MCF 10A (cell line): ENCODE measurements at regions of chr19 and their contacts with region 1.

Region 1: DNA sequence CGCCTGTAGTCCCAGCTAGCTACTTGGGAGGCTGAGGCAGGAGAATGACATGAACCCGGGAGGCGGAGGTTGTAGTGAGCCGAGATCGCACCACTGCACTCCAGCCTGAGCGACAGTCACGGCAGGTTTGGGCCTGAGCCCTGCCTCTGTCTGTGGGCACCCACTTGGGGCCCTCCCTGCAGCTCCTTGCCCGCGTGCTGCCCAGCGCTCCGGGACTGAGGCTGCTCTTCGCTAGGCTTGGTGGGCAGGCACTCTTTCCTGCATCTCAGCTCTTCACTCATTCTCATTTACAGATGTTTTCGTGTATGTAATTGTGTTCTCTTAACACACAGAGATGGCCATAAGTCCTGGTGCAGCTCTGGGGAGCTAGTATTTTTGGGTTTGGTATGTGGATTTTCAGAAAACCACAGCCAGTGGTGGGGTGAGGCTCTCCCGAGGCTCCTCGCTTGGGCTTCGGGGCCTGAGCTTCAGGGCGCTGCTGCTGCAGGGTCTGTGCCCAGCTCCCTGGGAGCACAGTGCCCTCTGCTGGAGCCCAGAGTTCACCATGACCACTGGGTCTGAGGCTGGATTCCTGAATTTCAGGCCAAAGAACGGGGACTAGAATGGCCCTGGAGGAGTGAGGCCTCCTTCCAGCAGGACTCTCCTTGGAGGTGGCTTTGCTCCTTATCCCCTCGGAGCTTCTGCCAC is 15.2 kb downstream of the UPF1 start:
- DNase-seq: peak; percentile 72
- H3K4me3 Mint-ChIP-seq: no peak overlapping the region
- H3K27ac Mint-ChIP-seq: peak overlapping the region; percentile 46
- H3K4me1 Mint-ChIP-seq: peaks cover 24% of the 10 kb centered on the region
- H3K27me3 Mint-ChIP-seq: no peaks in the 10 kb centered on the region
- CTCF ChIP-seq: peak; percentile 87

Region 2: GRCh38 chr19:18594096-18594823 is 252.7 kb before region 1 on chr19:
- CTCF ChIA-PET with region 1: interaction called, 25 read pairs
- POLR2A ChIA-PET with region 1: interaction called, 5 read pairs
- intact Hi-C with region 1: loop called (anchors 1 kb)
- DNase-seq: peak; percentile 73
- H3K4me3 Mint-ChIP-seq: no peak overlapping the region
- H3K27ac Mint-ChIP-seq: no peak overlapping the region
- H3K4me1 Mint-ChIP-seq: peaks cover 17% of the 10 kb centered on the region
- H3K27me3 Mint-ChIP-seq: no peaks in the 10 kb centered on the region
- CTCF ChIP-seq: peak; percentile 93

Region 3: GRCh38 chr19:18771328-18772242 is 75.4 kb before region 1 on chr19:
- CTCF ChIA-PET with region 1: interaction called, 69 read pairs
- POLR2A ChIA-PET with region 1: interaction called, 3 read pairs
- intact Hi-C with region 1: loop called (anchors 1 kb)
- DNase-seq: no peak
- H3K4me3 Mint-ChIP-seq: no peak overlapping the region
- H3K27ac Mint-ChIP-seq: no peak overlapping the region
- H3K4me1 Mint-ChIP-seq: peaks cover 38% of the 10 kb centered on the region
- H3K27me3 Mint-ChIP-seq: no peaks in the 10 kb centered on the region
- CTCF ChIP-seq: no peak

Region 4: DNA sequence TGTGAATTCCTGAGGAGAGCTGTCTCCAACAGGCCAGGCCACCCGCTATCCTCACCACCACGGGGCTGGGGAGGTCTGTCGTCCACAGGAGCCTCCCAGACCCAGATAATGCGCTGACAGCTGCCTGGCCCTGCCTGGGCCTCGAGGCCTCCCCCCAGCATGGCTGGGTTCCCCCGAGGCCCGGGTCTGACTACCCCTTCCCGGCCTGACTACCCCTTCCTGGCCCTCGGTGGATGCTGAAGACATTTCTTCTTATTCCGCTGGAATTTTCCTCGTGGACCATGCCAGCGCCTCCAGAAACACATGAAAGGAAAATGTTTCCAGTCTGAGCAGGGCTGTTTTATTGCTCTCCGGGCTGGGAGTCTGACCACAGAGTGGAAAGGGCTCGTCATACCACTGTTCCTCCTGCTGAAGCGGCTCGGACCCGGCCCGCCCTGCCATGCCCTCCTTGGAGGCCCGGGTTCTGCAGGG is 39.1 kb before region 1 on chr19:
- CTCF ChIA-PET with region 1: interaction called, 14 read pairs
- POLR2A ChIA-PET with region 1: no interaction called
- intact Hi-C with region 1: no loop called
- DNase-seq: no peak
- H3K4me3 Mint-ChIP-seq: no peak overlapping the region
- H3K27ac Mint-ChIP-seq: no peak overlapping the region
- H3K4me1 Mint-ChIP-seq: no peaks in the 10 kb centered on the region
- H3K27me3 Mint-ChIP-seq: no peaks in the 10 kb centered on the region
- CTCF ChIP-seq: no peak

Region 5: DNA sequence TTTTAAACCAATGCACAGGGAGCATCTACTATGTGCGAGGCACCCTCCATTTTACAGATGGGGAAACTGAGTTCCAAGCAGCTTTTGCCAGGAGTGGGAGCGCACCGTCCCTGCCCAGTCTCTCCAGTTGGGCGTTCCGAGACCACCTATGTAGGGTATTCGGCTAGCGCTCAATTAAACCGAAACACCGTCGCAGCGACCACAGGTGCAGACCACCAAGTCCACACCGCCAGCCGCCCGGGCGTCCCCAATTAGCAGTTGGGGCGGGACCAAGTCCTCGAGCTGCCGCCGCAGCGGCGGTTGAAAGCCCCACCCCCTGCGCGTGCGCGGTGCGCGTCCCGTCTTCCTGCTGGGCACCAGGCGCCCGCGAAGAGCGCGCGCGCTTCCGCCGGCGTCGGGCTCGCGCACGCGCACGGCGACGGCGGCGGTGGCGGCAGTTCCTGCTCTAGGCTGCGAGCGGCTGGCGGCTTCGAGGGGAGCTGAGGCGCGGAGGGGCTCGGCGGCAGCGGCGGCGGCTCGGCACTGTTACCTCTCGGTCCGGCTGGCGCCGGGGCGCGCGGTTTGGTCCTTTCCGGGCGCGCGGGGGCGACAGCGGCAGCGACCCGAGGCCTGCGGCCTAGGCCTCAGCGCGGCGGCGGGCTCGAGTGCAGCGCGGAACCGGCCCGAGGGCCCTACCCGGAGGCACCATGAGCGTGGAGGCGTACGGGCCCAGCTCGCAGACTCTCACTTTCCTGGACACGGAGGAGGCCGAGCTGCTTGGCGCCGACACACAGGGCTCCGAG is 15.3 kb before region 1 on chr19 and contains the start of gene UPF1:
- CTCF ChIA-PET with region 1: interaction called, 46 read pairs
- POLR2A ChIA-PET with region 1: interaction called, 29 read pairs
- intact Hi-C with region 1: no loop called
- DNase-seq: peak; percentile 90
- H3K4me3 Mint-ChIP-seq: peak within 1 kb of the TSS; percentile 94
- H3K27ac Mint-ChIP-seq: peak within 1 kb of the TSS; percentile 98
- H3K4me1 Mint-ChIP-seq: peaks cover 25% of the 10 kb centered on the region
- H3K27me3 Mint-ChIP-seq: no peaks in the 10 kb centered on the region
- CTCF ChIP-seq: no peak
- total RNA-seq, gene UPF1: 79.8 and 85.0 TPM in 2 replicates

Region 6: DNA sequence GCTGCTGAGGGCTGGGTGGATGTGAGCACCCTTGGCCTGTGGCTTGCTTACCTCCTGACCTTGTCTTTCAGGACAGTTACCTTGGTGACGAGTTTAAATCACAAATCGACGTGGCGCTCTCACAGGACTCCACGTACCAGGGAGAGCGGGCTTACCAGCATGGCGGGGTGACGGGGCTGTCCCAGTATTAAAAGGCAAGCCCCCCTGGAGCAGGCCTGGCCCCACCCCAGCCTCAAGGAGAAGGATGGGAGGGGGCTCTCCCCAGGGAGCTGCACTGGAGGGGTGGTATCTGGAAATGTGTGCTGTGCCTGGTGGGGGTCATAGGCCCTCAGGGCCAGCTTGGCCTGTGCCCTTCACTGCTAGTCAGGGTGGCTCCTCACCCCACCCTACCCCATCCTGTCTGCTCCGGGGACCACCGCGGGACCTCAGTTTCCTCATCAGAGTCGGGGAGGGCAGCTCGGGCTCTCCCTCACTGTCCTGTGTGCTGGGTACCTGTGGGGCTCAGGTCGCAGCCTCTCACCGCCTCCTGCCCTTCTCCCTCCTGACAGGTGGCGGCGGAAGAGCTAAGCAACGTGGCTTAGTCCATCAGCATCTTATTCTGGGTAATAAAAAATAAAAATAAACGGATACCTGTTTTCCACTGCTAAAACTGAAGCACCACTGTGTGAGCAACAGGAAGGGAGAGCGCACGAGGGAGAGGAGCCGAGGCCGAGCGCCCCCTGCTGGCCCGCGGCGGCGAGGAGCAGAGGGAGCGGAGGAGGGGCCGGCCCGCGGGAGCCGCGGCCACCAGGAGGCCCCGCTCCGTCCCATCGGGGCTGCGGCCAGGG is 19.2 kb after region 1 on chr19:
- CTCF ChIA-PET with region 1: interaction called, 22 read pairs
- POLR2A ChIA-PET with region 1: no interaction called
- intact Hi-C with region 1: no loop called
- DNase-seq: peak; percentile 70
- H3K4me3 Mint-ChIP-seq: no peak overlapping the region
- H3K27ac Mint-ChIP-seq: no peak overlapping the region
- H3K4me1 Mint-ChIP-seq: no peaks in the 10 kb centered on the region
- H3K27me3 Mint-ChIP-seq: no peaks in the 10 kb centered on the region
- CTCF ChIP-seq: peak; percentile 97

Region 7: GRCh38 chr19:18951665-18952281 is 104.8 kb after region 1 on chr19:
- CTCF ChIA-PET with region 1: no interaction called
- POLR2A ChIA-PET with region 1: no interaction called
- intact Hi-C with region 1: no loop called
- DNase-seq: peak; percentile 75
- H3K4me3 Mint-ChIP-seq: no peak overlapping the region
- H3K27ac Mint-ChIP-seq: no peak overlapping the region
- H3K4me1 Mint-ChIP-seq: peaks cover 18% of the 10 kb centered on the region
- H3K27me3 Mint-ChIP-seq: no peaks in the 10 kb centered on the region
- CTCF ChIP-seq: no peak

Region 8: DNA sequence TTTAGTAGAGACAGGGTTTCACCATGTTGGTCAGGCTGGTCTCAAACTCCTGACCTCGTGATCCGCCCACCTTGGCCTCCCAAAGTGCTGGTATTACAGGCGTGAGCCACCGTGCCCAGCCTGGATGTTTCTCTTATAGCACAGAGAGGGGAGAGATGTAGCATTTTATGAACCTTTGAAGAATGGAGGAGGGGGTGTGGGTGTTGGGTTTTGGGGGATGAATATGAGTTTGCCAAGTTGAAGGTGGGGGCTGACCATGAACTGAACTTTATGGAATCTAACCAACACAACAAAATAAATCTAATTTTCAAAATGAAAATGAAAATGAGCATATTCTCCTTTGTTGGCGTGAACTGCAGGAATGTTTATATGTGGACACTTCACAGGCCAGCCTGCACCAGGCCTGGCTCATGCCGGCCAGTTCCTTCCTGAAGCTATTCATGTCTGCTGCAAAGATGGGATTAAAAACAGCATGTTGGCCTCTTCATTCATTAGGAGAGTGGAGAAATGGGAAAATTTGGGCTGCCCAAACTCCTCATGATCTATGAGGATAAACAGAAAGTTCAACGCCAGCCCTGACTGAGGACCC is 133.5 kb after region 1 on chr19:
- CTCF ChIA-PET with region 1: no interaction called
- POLR2A ChIA-PET with region 1: no interaction called
- intact Hi-C with region 1: no loop called
- DNase-seq: no peak
- H3K4me3 Mint-ChIP-seq: no peak overlapping the region
- H3K27ac Mint-ChIP-seq: no peak overlapping the region
- H3K4me1 Mint-ChIP-seq: no peaks in the 10 kb centered on the region
- H3K27me3 Mint-ChIP-seq: no peaks in the 10 kb centered on the region
- CTCF ChIP-seq: no peak